Common myeloid progenitor, CD34-positive (primary cell): ENCODE measurements at regions of chr6 and their contacts with region 1.

Region 1: GRCh38 chr6:35297601-35298481 is at the start of gene DEF6:
- DNase-seq: peak; percentile 91 to 94 (median 94)
- H3K4me3 ChIP-seq: peak within 1 kb of the TSS; percentile 44 to 91 (median 78)
- H3K27ac ChIP-seq: peak within 1 kb of the TSS; percentile 85 to 94
- H3K4me1 ChIP-seq: peaks cover 37 to 61% (median 57%) of the 10 kb centered on the region in 4 experiments
- H3K27me3 ChIP-seq: no peaks in the 10 kb centered on the region

Region 2: GRCh38 chr6:35128496-35128895 is 169.3 kb before region 1 on chr6:
- CTCF ChIA-PET with region 1: no interaction called
- POLR2A ChIA-PET with region 1: no interaction called
- DNase-seq: no peak
- H3K4me3 ChIP-seq: no peak overlapping the region
- H3K27ac ChIP-seq: no peak overlapping the region
- H3K4me1 ChIP-seq: no peaks in the 10 kb centered on the region
- H3K27me3 ChIP-seq: no peaks in the 10 kb centered on the region

Region 3: DNA sequence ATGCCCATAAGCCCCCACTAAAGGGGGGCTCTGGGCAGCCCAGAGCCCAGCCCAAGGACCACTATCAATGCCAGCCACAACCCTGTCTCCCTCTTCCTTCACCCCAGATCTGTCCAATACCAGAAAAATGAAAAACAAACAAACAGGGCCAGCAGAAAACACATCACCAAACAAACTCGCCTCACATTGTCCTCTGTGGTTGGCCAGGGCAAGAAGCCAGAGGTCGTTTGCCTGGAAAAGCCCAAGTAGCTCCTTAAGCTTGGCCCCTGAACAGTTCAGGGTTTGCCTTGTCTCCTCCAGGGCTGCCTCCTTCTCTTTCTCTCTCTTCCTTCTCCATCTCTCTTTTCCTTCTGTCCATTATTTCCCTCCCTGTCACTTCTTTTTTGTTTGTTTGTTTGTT is 94.2 kb before region 1 on chr6:
- CTCF ChIA-PET with region 1: no interaction called
- POLR2A ChIA-PET with region 1: no interaction called
- DNase-seq: no peak
- H3K4me3 ChIP-seq: no peak overlapping the region
- H3K27ac ChIP-seq: no peak overlapping the region
- H3K4me1 ChIP-seq: no peaks in the 10 kb centered on the region
- H3K27me3 ChIP-seq: peaks cover 0 to 23% (median 20%) of the 10 kb centered on the region in 5 experiments

Region 4: GRCh38 chr6:35287671-35288396 is 10.0 kb before region 1 on chr6:
- CTCF ChIA-PET with region 1: interaction called, 54 read pairs
- POLR2A ChIA-PET with region 1: no interaction called
- DNase-seq: no peak
- H3K4me3 ChIP-seq: no peak overlapping the region
- H3K27ac ChIP-seq: no peak overlapping the region
- H3K4me1 ChIP-seq: no peaks in the 10 kb centered on the region
- H3K27me3 ChIP-seq: no peaks in the 10 kb centered on the region

Region 5: DNA sequence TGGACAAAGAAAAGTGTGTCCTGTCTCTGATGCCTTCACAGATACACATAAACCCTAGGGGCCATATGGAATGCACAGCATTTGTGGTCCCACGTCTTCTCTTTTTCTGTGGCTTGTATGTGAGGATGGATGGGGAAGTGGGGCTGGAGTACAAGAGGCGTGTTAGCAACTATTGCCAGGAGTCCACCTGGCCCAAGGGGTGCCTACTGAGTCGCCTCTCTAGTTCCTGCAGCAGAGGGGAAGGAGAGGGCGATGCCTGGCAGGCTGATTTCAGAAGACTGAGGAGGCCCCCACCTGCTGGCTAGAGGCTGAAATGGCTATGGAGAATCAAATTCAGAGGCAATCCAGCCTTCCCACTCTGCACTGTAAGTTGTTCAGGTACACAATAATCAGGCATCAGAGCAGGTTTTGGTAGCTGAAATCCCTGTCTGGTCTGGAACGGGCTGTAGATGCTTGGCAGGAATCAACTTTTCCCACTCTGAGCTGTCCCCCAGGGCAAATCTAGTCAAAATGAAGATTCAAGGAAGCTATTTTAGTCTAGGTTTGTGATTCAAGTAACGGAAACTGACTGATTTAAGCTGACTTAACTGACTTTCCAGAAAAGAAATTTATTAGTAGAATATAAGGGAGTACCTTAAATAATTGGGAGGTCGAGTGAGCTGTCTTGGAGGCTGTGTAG is 29.6 kb after region 1 on chr6:
- CTCF ChIA-PET with region 1: interaction called, 405 read pairs
- POLR2A ChIA-PET with region 1: interaction called, 3 read pairs
- DNase-seq: peak; percentile 75 to 84 (median 82)
- H3K4me3 ChIP-seq: no peak overlapping the region
- H3K27ac ChIP-seq: peak overlapping the region in 1 of 2 experiments; percentile 12
- H3K4me1 ChIP-seq: peaks cover 0 to 10% (median 9%) of the 10 kb centered on the region in 4 experiments
- H3K27me3 ChIP-seq: no peaks in the 10 kb centered on the region

Region 6: GRCh38 chr6:35419417-35419816 is 121.6 kb after region 1 on chr6:
- CTCF ChIA-PET with region 1: interaction called, 10 read pairs
- POLR2A ChIA-PET with region 1: interaction called, 3 read pairs
- DNase-seq: peak; percentile 24 to 55 (median 52)
- H3K4me3 ChIP-seq: no peak overlapping the region
- H3K27ac ChIP-seq: no peak overlapping the region
- H3K4me1 ChIP-seq: peaks cover 5 to 28% (median 26%) of the 10 kb centered on the region in 4 experiments
- H3K27me3 ChIP-seq: no peaks in the 10 kb centered on the region

Region 7: GRCh38 chr6:35452186-35453090 is 154.6 kb after region 1 on chr6 and contains the start of gene FANCE:
- CTCF ChIA-PET with region 1: interaction called, 92 read pairs
- POLR2A ChIA-PET with region 1: interaction called, 4 read pairs
- DNase-seq: peak; percentile 86 to 90 (median 89)
- H3K4me3 ChIP-seq: peak within 1 kb of the TSS; percentile 52 to 85 (median 70)
- H3K27ac ChIP-seq: peak within 1 kb of the TSS in 1 of 2 experiments; percentile 7
- H3K4me1 ChIP-seq: peaks cover 18 to 35% (median 21%) of the 10 kb centered on the region in 4 experiments
- H3K27me3 ChIP-seq: no peaks in the 10 kb centered on the region

Region 8: GRCh38 chr6:35463292-35463691 is 165.5 kb after region 1 on chr6:
- CTCF ChIA-PET with region 1: interaction called, 30 read pairs
- POLR2A ChIA-PET with region 1: no interaction called
- DNase-seq: no peak
- H3K4me3 ChIP-seq: no peak overlapping the region
- H3K27ac ChIP-seq: no peak overlapping the region
- H3K4me1 ChIP-seq: peaks cover 0 to 7% (median 5%) of the 10 kb centered on the region in 4 experiments
- H3K27me3 ChIP-seq: no peaks in the 10 kb centered on the region

Region 9: GRCh38 chr6:35468181-35468979 is 170.5 kb after region 1 on chr6 and contains the start of gene RPL10A:
- CTCF ChIA-PET with region 1: interaction called, 30 read pairs
- POLR2A ChIA-PET with region 1: interaction called, 6 read pairs
- DNase-seq: peak; percentile 97 to 99 (median 97)
- H3K4me3 ChIP-seq: peak within 1 kb of the TSS; percentile 73 to 97 (median 90)
- H3K27ac ChIP-seq: peak within 1 kb of the TSS; percentile 88 to 94
- H3K4me1 ChIP-seq: peaks cover 2 to 39% (median 30%) of the 10 kb centered on the region in 4 experiments
- H3K27me3 ChIP-seq: no peaks in the 10 kb centered on the region